WTC11 (cell line): ENCODE measurements at regions of chr17 and their contacts with region 1.

Region 1: DNA sequence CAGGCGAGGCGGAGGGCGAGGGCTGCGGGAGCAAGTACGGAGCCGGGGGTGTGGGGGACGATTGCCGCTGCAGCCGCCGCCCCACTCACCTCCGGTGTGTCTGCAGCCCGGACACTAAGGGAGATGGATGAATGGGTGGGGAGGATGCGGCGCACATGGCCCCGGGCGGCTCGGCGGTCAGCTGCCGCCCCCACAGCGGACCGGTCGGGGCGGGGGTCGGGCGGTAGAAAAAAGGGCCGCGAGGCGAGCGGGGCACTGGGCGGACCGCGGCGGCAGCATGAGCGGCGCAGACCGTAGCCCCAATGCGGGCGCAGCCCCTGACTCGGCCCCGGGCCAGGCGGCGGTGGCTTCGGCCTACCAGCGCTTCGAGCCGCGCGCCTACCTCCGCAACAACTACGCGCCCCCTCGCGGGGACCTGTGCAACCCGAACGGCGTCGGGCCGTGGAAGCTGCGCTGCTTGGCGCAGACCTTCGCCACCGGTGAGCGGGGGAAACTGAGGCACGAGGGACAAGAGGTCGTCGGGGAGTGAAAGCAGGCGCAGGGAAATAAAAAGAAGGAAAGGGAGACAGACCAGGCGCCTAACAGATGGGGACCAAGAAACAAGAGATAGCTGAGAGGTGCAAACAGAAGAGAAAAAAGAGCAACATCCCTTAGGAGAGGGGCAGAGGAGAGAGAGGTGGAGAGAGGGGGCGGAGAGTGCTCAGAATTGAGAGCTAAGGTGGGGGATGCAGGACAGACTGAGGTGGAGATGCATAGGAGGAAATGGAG is at the start of gene PNMT:
- DNase-seq: peak; percentile 83
- ATAC-seq: peak; percentile 34
- H3K4me3 Mint-ChIP-seq: peak within 1 kb of the TSS; percentile 71
- H3K27ac Mint-ChIP-seq: no peak within 1 kb of the TSS
- H3K4me1 Mint-ChIP-seq: peaks cover 48% of the 10 kb centered on the region
- H3K27me3 Mint-ChIP-seq: peaks cover 47% of the 10 kb centered on the region
- CTCF ChIP-seq: peak; percentile 26; the same call in 1 of the 2 replicates
- total RNA-seq, gene PNMT: 2.4 to 3.1 TPM (median 2.7 TPM) in 3 replicates

Region 2: GRCh38 chr17:39643271-39643670 is 25.1 kb before region 1 on chr17:
- CTCF ChIA-PET with region 1: interaction called, 15 read pairs
- POLR2A ChIA-PET with region 1: interaction called, 3 read pairs
- DNase-seq: no peak
- ATAC-seq: no peak
- H3K4me3 Mint-ChIP-seq: no peak overlapping the region
- H3K27ac Mint-ChIP-seq: 0 out of 2 replicates have a peak overlapping the region, but pooled peaks have one; percentile 37
- H3K4me1 Mint-ChIP-seq: peaks cover 55% of the 10 kb centered on the region
- H3K27me3 Mint-ChIP-seq: no peaks in the 10 kb centered on the region
- CTCF ChIP-seq: no peak

Region 3: DNA sequence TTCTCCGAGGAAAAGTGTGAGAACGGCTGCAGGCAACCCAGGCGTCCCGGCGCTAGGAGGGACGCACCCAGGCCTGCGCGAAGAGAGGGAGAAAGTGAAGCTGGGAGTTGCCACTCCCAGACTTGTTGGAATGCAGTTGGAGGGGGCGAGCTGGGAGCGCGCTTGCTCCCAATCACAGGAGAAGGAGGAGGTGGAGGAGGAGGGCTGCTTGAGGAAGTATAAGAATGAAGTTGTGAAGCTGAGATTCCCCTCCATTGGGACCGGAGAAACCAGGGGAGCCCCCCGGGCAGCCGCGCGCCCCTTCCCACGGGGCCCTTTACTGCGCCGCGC is 31.4 kb after region 1 on chr17 and contains the start of gene ERBB2:
- CTCF ChIA-PET with region 1: interaction called, 16 read pairs
- POLR2A ChIA-PET with region 1: interaction called, 3 read pairs
- DNase-seq: peak; percentile 73
- ATAC-seq: peak; percentile 43
- H3K4me3 Mint-ChIP-seq: peak within 1 kb of the TSS; percentile 95
- H3K27ac Mint-ChIP-seq: peak within 1 kb of the TSS; percentile 96
- H3K4me1 Mint-ChIP-seq: peaks cover 73% of the 10 kb centered on the region
- H3K27me3 Mint-ChIP-seq: no peaks in the 10 kb centered on the region
- CTCF ChIP-seq: no peak
- total RNA-seq, gene ERBB2: 153 to 209 TPM (median 158 TPM) in 3 replicates

Region 4: GRCh38 chr17:39754161-39754951 is 86.0 kb after region 1 on chr17:
- CTCF ChIA-PET with region 1: interaction called, 12 read pairs
- POLR2A ChIA-PET with region 1: no interaction called
- DNase-seq: peak; percentile 81
- ATAC-seq: peak; percentile 64
- H3K4me3 Mint-ChIP-seq: peak overlapping the region; percentile 42
- H3K27ac Mint-ChIP-seq: no peak overlapping the region
- H3K4me1 Mint-ChIP-seq: peaks cover 57% of the 10 kb centered on the region
- H3K27me3 Mint-ChIP-seq: peaks cover 19% of the 10 kb centered on the region
- CTCF ChIP-seq: peak; percentile 98